Dendritic cell treated with granulocyte-macrophage colony-stimulating factor and Interleukin-4, amounts not matched to agents 40 ng/mL and 50 ng/mL, for 4 days (primary cell): ENCODE measurements at regions of chr2 and their contacts with region 1.

Region 1: DNA sequence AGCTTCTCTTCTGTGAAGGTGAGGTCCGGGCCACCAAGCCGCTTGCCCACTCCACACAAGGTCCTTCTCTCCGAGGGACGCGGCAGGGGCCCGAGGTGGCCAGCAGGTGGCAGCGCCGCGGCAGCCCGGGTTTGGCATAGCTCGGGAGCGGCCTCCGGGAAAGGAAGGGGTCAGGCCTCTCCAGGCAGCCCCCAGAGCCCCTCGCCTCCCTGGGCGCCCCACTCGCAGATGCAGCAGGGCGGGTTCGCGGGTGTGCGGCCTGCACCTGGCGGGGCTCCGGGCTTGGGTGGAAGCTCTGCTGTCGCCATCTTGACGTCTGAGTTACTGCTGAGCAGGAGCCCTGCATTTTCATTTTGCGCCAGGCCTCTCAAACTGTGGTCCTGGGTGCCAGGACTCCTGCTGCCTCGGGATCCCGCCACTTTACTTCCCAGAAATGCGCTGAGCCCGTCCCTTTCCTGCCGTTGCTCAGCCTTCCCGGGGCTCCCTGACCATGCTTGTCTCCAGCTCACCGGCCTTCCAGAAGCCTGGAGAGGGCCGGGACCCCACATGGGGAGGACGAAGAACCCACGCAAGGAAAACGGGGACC is 18.6 kb upstream of the NCL start:
- H3K4me3 Mint-ChIP-seq: peak overlapping the region; percentile 86
- H3K27ac Mint-ChIP-seq: peak overlapping the region; percentile 82
- H3K4me1 Mint-ChIP-seq: peaks cover 22% of the 10 kb centered on the region
- H3K27me3 Mint-ChIP-seq: peaks cover 9% of the 10 kb centered on the region

Region 2: GRCh38 chr2:229572507-229573271 is 1910.2 kb before region 1 on chr2:
- intact Hi-C with region 1: no loop called
- H3K4me3 Mint-ChIP-seq: no peak overlapping the region
- H3K27ac Mint-ChIP-seq: no peak overlapping the region
- H3K4me1 Mint-ChIP-seq: no peaks in the 10 kb centered on the region
- H3K27me3 Mint-ChIP-seq: peaks cover 9% of the 10 kb centered on the region

Region 3: GRCh38 chr2:231260442-231261208 is 222.3 kb before region 1 on chr2:
- intact Hi-C with region 1: no loop called
- H3K4me3 Mint-ChIP-seq: no peak overlapping the region
- H3K27ac Mint-ChIP-seq: no peak overlapping the region
- H3K4me1 Mint-ChIP-seq: peaks cover 15% of the 10 kb centered on the region
- H3K27me3 Mint-ChIP-seq: no peaks in the 10 kb centered on the region

Region 4: DNA sequence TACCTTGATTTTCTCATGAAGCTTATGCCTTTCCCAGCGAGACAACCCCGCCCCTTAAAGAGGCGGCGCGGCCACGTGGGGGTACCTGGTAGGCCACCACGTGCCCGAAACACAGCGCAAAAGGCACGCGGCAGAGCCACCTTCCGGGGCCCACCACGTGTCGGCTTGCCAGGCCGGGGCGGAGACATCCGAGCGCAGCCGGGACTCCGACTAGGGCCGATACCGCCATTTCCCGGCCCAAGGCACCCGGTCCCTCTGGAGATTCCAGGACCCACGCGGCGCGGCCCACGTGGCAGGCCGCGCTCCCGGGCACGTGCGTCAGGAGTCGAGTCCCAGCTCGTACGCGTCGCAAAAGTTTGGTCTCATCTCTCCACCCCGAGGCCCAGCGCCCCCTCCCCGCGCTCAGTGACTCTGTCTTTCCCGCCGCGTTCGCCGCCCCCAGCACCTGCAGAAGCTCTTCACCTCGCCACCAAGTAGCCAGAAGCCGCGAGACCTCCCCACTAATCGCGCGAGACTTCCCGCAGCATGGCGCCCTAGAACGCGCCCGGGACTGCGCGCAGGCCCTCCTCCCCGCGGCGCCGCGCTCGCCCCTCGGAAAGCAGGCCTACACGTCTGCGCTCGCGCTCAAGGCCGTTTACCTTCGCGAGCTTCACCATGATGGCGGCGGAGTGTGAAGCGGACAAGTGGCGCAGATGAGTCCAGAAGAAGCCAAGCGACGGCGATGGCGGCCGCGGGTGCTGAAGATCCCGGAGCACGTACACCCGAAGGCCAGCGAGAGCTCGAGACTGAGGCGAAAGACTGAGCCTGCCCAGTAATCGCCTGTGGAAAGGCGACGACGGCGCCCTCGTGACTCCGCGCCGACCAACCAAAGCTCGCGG is 19.0 kb before region 1 on chr2 and contains the start of gene NCL:
- intact Hi-C with region 1: loop called (anchors 2 kb)
- H3K4me3 Mint-ChIP-seq: peak within 1 kb of the TSS; percentile 96
- H3K27ac Mint-ChIP-seq: peak within 1 kb of the TSS; percentile 94
- H3K4me1 Mint-ChIP-seq: peaks cover 62% of the 10 kb centered on the region
- H3K27me3 Mint-ChIP-seq: no peaks in the 10 kb centered on the region

Region 5: DNA sequence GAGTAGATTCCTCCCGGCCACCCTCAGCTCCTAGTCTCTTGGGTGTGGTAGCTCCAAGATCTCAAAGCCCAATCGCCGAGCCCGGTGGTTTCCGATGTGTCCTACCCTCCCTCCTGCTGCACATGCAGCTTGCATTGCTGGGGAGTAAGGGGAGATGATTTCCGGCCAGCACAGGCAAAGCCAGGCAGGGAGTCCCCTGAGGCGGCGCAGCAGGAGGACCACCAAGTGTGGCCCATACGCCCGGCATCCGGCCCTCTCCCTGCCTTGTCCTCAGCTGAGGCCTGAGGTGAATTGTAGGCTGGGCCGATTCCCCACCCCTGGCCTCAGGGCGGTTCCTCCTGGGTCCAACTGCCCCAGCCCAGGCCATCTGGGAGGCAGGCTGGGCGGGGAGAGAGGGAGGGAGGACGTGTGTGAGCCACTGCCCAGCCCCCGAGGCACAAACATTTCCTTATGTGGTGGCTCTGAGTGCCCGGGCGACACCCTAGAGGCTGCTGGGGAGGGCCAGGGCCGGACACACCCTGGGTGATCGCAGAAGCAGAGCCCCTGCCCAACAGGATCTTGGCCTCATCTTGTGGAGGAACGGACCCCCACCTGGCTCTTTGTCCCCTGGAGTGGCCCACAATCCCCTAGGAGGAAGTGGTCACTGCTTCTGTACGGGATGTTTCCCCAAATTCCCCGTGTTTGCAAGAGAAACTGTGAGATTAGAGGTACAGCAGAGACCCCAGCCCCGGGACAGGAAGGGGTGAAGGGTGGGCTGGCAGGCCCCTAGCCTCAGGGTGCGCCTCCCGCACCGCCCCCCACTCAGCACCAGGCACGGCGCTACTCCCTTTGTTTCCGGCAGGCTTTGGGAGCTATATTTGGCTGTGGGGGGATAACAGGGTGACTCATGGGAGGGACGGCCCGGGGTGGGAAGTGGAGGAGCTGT is 183.5 kb after region 1 on chr2:
- intact Hi-C with region 1: no loop called
- H3K4me3 Mint-ChIP-seq: peak overlapping the region; percentile 88
- H3K27ac Mint-ChIP-seq: peak overlapping the region; percentile 95
- H3K4me1 Mint-ChIP-seq: peaks cover 55% of the 10 kb centered on the region
- H3K27me3 Mint-ChIP-seq: no peaks in the 10 kb centered on the region

Region 6: DNA sequence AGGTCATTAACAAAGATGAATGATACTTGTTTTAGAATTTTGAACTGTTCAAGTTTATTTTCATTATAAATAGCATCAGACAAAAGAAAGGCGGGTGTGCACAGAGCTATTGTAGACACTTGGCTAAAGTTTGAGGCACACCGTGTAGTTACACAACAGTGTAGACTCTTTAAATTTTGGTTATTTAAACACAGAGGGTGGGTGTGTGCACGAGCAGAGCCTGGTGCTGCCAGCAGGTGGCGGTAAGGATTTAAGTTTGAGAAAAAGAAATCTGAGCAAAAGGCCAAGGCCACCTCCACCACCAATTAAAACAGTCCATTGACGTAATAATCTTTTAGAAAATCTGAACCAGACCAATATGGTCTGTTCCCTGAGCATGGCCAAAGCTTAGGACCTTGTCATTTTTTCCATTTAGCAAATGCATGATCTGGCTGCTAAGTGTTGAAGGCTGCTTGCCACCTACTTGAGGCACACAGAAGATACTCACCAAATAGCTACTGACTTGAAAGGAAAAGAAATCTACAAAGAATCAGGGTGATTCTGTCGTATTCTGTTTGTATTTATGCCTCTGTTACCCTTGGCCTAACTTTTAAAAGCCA is 317.7 kb after region 1 on chr2:
- intact Hi-C with region 1: no loop called
- H3K4me3 Mint-ChIP-seq: no peak overlapping the region
- H3K27ac Mint-ChIP-seq: no peak overlapping the region
- H3K4me1 Mint-ChIP-seq: no peaks in the 10 kb centered on the region
- H3K27me3 Mint-ChIP-seq: no peaks in the 10 kb centered on the region